Mammary epithelial cell (primary cell): ENCODE measurements at regions of chr16 and their contacts with region 1.

Region 1: DNA sequence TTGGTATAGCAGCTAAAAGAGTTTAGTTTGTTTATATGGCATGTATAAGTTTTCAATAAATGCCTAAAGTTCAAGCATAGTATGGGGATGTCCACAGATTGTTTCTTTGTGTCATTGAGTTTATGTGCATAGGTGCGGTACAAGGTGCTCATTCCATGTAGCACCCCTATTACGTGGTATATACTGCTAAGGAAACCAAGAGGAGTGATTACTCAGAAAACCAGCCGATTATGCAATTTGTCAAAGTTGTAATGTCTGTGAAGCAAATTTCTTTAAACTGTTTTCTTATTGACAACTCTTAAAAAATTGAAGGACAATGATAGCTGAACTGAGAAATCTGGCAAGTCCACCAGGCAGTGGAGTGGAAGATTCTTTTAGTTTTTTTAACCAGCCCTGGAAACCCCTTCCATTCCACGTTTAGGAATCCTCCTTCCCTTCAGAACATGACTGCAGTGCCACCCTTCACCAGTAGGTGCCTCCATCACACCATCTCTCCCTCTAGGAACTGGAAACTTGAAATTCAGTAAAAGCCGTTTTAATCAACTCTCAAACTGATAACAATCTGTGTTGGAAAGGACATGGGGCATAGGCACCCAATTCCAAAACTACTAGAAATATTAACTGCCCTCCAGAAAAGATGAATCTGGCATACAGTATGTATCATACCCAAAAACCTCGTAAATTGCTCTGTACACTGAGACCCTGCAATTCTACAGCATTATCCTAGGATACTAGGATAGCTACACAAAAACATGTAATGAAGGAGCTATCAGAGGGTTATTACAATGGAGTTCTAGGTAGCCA is 43.5 kb downstream of the REXO5 start:
- DNase-seq: peak; percentile 59
- H3K4me3 ChIP-seq: no peak overlapping the region
- H3K27ac ChIP-seq: no peak overlapping the region
- H3K4me1 ChIP-seq: peaks cover 26% of the 10 kb centered on the region
- H3K27me3 ChIP-seq: no peaks in the 10 kb centered on the region
- CTCF ChIP-seq: peak; percentile 99

Region 2: DNA sequence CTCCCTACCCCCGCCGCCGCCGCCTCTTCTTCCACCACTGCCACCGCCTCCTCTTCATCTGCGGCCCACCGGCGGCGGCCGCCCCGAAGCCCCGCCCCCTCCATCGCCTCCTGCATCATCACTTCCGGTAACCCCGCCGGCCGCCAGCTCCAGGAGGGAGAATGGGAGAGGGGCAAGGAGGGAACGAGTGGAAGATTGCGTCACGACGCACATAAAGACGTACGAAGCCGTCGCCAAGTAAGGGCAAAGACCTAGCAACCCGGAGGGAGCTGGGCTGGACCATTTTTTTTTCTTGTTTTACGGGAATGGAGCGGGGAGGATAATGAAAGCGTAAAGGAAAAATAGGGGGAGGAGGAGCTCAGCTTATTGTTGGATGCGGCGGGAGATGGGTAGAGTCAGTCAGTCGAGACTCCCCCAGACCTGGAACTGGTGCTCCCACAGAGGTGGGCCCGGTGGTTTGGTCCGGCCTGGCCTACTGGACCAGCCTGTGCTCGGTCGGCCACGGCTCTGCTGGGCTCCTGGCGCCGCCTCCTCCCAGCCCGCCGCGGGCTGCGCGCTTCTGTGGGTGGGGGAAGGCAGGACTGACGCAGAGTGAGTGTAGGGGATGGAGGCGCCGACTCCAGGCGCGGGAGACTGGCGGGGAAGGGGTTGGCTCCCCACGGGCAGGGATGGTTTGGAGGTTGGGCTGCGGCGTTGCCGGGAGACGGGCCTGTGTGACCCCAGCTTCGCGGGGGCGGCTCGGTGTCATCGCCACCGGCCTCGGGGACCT is 50.7 kb after region 1 on chr16 and contains the starts of genes DCUN1D3 and LYRM1:
- CTCF ChIA-PET with region 1: no interaction called
- dilution Hi-C with region 1: no loop called
- in situ Hi-C with region 1: no loop called
- intact Hi-C with region 1: loop called (anchors 1 kb)
- DNase-seq: peak; percentile 98
- H3K4me3 ChIP-seq: peak within 1 kb of the TSS; percentile 79 to 85 (median 85)
- H3K27ac ChIP-seq: peak within 1 kb of the TSS; percentile 99
- H3K4me1 ChIP-seq: peaks cover 62% of the 10 kb centered on the region
- H3K27me3 ChIP-seq: no peaks in the 10 kb centered on the region
- CTCF ChIP-seq: no peak
- total RNA-seq, gene DCUN1D3: 20.2 to 25.0 TPM
- total RNA-seq, gene LYRM1: 20.8 to 24.3 TPM

Region 3: DNA sequence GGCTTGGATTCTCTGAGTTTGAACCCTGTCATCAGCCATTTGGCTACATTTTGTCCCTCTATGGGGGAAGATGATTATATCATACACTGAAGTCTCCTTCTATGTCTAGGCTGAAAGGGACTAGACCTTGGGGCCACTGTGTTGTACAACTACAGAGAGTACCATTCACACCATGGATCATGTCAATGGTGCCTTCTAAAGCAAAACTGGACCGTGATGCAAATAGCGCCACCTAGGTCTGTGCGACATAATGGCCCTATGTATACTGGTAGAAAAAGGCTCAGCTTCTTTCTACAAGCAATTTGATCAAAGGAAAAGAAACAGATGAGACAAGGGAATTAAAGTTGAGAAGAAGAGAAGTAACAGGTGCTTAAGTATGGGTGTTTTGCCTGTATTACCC is 151.5 kb after region 1 on chr16:
- CTCF ChIA-PET with region 1: no interaction called
- dilution Hi-C with region 1: no loop called
- in situ Hi-C with region 1: no loop called
- intact Hi-C with region 1: loop called (anchors 5 kb)
- DNase-seq: no peak
- H3K4me3 ChIP-seq: no peak overlapping the region
- H3K27ac ChIP-seq: no peak overlapping the region
- H3K4me1 ChIP-seq: no peaks in the 10 kb centered on the region
- H3K27me3 ChIP-seq: no peaks in the 10 kb centered on the region
- CTCF ChIP-seq: peak; percentile 34 to 43

Region 4: DNA sequence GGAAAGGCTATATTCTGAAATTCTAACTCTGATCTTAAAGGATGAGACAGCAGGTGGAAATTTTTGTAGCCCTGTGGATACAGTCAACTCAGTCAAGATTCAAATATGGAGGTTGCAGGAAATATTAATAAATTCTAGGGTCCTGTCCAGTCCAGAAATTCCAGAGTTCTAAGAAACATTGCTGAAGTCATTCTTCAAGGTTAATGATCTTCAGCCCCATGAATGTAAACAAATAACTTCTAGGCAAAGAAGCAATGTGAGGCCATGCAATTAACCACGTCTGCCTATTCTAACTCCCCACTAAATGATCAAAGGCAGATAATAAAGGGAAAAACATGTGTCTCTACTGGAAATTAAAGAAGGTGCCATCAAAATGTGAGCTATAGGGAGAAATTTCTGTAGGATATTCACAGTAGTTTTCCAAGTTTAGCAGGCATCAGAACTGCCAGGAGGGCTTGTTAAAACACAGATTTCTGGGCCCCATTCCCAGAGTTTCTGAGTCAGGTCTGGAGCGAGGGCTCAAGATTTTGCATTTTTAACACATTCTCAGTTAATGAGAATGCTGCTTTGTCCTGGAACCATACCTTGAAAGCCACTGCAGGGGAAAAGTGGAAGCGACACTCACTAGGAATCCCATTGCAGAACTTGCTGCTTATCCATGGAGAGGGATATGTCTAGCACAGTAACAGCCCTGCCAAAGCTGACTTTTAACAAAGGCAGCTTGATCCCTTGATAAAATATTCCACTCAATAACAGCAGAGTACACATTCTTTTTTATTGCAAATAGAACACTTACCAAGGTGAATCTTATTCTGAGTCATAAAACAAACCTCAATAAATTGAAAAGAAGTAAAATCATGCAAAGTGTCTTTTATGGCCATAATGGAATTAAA is 239.1 kb after region 1 on chr16:
- CTCF ChIA-PET with region 1: no interaction called
- dilution Hi-C with region 1: no loop called
- in situ Hi-C with region 1: loop called (anchors 5 to 10 kb)
- intact Hi-C with region 1: no loop called
- DNase-seq: peak; percentile 35
- H3K4me3 ChIP-seq: no peak overlapping the region
- H3K27ac ChIP-seq: no peak overlapping the region
- H3K4me1 ChIP-seq: peaks cover 7% of the 10 kb centered on the region
- H3K27me3 ChIP-seq: peaks cover 2% of the 10 kb centered on the region
- CTCF ChIP-seq: no peak

Region 5: GRCh38 chr16:21277927-21278706 is 428.3 kb after region 1 on chr16 and contains the start of gene CRYM:
- CTCF ChIA-PET with region 1: no interaction called
- dilution Hi-C with region 1: no loop called
- in situ Hi-C with region 1: no loop called
- intact Hi-C with region 1: loop called (anchors 2 kb)
- DNase-seq: peak; percentile 30
- H3K4me3 ChIP-seq: peak within 1 kb of the TSS; percentile 34 to 51 (median 51)
- H3K27ac ChIP-seq: no peak within 1 kb of the TSS
- H3K4me1 ChIP-seq: peaks cover 5% of the 10 kb centered on the region
- H3K27me3 ChIP-seq: peaks cover 6% of the 10 kb centered on the region
- CTCF ChIP-seq: peak; percentile 41 to 90
- total RNA-seq, gene CRYM: 0.17 to 0.54 TPM

Region 6: GRCh38 chr16:21952793-21953540 is 1103.2 kb after region 1 on chr16 and contains the start of gene UQCRC2:
- CTCF ChIA-PET with region 1: no interaction called
- dilution Hi-C with region 1: no loop called
- in situ Hi-C with region 1: no loop called
- intact Hi-C with region 1: no loop called
- DNase-seq: peak; percentile 93
- H3K4me3 ChIP-seq: peak within 1 kb of the TSS; percentile 83 to 99 (median 96)
- H3K27ac ChIP-seq: peak within 1 kb of the TSS; percentile 99
- H3K4me1 ChIP-seq: peaks cover 23% of the 10 kb centered on the region
- H3K27me3 ChIP-seq: no peaks in the 10 kb centered on the region
- CTCF ChIP-seq: no peak
- total RNA-seq, gene UQCRC2: 181 to 205 TPM

Region 7: GRCh38 chr16:22346483-22346882 is 1496.7 kb after region 1 on chr16:
- CTCF ChIA-PET with region 1: no interaction called
- dilution Hi-C with region 1: no loop called
- in situ Hi-C with region 1: loop called in 1 of 2 experiments (anchors 25 kb)
- intact Hi-C with region 1: no loop called
- DNase-seq: no peak
- H3K4me3 ChIP-seq: no peak overlapping the region
- H3K27ac ChIP-seq: peak overlapping the region; percentile 96
- H3K4me1 ChIP-seq: peaks cover 38% of the 10 kb centered on the region
- H3K27me3 ChIP-seq: no peaks in the 10 kb centered on the region
- CTCF ChIP-seq: no peak